PC-9 (cell line): ENCODE measurements at regions of chr20 and their contacts with region 1.

Region 1: GRCh38 chr20:25057234-25058050 is 497 bp downstream of the ACSS1 start:
- DNase-seq: peak; percentile 60 to 69
- H3K4me3 ChIP-seq: peak overlapping the region; percentile 71
- H3K27ac ChIP-seq: no peak overlapping the region
- H3K4me1 ChIP-seq: peaks cover 48% of the 10 kb centered on the region
- H3K27me3 ChIP-seq: no peaks in the 10 kb centered on the region
- CTCF ChIP-seq: no peak

Region 2: GRCh38 chr20:25017257-25018115 is 40.0 kb before region 1 on chr20:
- CTCF ChIA-PET with region 1: interaction called, 3 read pairs
- POLR2A ChIA-PET with region 1: no interaction called
- intact Hi-C with region 1: loop called (anchors 5 kb)
- DNase-seq: peak; percentile 87 to 94
- H3K4me3 ChIP-seq: peak overlapping the region; percentile 14; the same call in 1 of the 2 replicates
- H3K27ac ChIP-seq: peak overlapping the region; percentile 17; the same call in 1 of the 2 replicates
- H3K4me1 ChIP-seq: peaks cover 37% of the 10 kb centered on the region
- H3K27me3 ChIP-seq: no peaks in the 10 kb centered on the region
- CTCF ChIP-seq: no peak

Region 3: GRCh38 chr20:25039396-25040115 is 17.9 kb before region 1 on chr20:
- CTCF ChIA-PET with region 1: no interaction called
- POLR2A ChIA-PET with region 1: no interaction called
- intact Hi-C with region 1: loop called (anchors 2 kb)
- DNase-seq: peak; percentile 59 to 71
- H3K4me3 ChIP-seq: no peak overlapping the region
- H3K27ac ChIP-seq: no peak overlapping the region
- H3K4me1 ChIP-seq: peaks cover 11% of the 10 kb centered on the region; the same call in 1 of the 2 replicates
- H3K27me3 ChIP-seq: no peaks in the 10 kb centered on the region
- CTCF ChIP-seq: no peak

Region 4: GRCh38 chr20:25100914-25101313 is 43.5 kb after region 1 on chr20:
- CTCF ChIA-PET with region 1: no interaction called
- POLR2A ChIA-PET with region 1: no interaction called
- intact Hi-C with region 1: no loop called
- DNase-seq: no peak
- H3K4me3 ChIP-seq: no peak overlapping the region
- H3K27ac ChIP-seq: no peak overlapping the region
- H3K4me1 ChIP-seq: no peaks in the 10 kb centered on the region
- H3K27me3 ChIP-seq: no peaks in the 10 kb centered on the region
- CTCF ChIP-seq: no peak